Calu3 (cell line): ENCODE measurements at regions of chr16 and their contacts with region 1.

Region 1: GRCh38 chr16:23803591-23804123 is 32.1 kb upstream of the PRKCB start:
- DNase-seq: peak; percentile 72
- H3K4me3 Mint-ChIP-seq: no peak overlapping the region
- H3K27ac Mint-ChIP-seq: no peak overlapping the region
- H3K4me1 Mint-ChIP-seq: peaks cover 12% of the 10 kb centered on the region
- H3K27me3 Mint-ChIP-seq: peaks cover 44% of the 10 kb centered on the region
- CTCF ChIP-seq: peak; percentile 54

Region 2: GRCh38 chr16:23678430-23679273 is 125.0 kb before region 1 on chr16 and contains the start of gene PLK1:
- CTCF ChIA-PET with region 1: no interaction called
- intact Hi-C with region 1: loop called (anchors 10 kb)
- DNase-seq: peak; percentile 92
- H3K4me3 Mint-ChIP-seq: peak within 1 kb of the TSS; percentile 100
- H3K27ac Mint-ChIP-seq: peak within 1 kb of the TSS; percentile 97
- H3K4me1 Mint-ChIP-seq: peaks cover 34% of the 10 kb centered on the region
- H3K27me3 Mint-ChIP-seq: no peaks in the 10 kb centered on the region
- CTCF ChIP-seq: peak; percentile 34
- total RNA-seq, gene PLK1: 122 and 136 TPM in 2 replicates

Region 3: DNA sequence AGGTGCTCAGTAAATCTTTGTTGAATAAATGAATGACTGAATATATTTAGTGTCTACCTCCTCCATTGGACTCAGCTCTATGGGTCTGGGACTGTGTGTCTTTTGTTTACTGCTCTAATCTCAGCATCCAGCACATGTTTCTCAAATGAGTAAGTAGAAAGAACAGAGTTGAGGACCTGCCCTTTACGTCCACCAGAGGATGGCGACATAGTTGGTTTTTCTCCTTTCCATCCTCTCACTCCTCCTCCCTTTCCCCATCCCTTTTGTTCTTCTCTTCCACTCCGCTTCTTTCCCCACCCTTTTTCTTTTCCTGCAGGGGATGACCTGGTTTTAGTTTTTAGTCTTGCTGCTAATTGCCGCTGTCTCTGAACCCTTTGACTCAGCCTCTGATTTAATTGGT is 60.9 kb before region 1 on chr16:
- CTCF ChIA-PET with region 1: no interaction called
- intact Hi-C with region 1: loop called (anchors 5 kb)
- DNase-seq: no peak
- H3K4me3 Mint-ChIP-seq: no peak overlapping the region
- H3K27ac Mint-ChIP-seq: no peak overlapping the region
- H3K4me1 Mint-ChIP-seq: no peaks in the 10 kb centered on the region
- H3K27me3 Mint-ChIP-seq: peaks cover 94% of the 10 kb centered on the region
- CTCF ChIP-seq: no peak

Region 4: DNA sequence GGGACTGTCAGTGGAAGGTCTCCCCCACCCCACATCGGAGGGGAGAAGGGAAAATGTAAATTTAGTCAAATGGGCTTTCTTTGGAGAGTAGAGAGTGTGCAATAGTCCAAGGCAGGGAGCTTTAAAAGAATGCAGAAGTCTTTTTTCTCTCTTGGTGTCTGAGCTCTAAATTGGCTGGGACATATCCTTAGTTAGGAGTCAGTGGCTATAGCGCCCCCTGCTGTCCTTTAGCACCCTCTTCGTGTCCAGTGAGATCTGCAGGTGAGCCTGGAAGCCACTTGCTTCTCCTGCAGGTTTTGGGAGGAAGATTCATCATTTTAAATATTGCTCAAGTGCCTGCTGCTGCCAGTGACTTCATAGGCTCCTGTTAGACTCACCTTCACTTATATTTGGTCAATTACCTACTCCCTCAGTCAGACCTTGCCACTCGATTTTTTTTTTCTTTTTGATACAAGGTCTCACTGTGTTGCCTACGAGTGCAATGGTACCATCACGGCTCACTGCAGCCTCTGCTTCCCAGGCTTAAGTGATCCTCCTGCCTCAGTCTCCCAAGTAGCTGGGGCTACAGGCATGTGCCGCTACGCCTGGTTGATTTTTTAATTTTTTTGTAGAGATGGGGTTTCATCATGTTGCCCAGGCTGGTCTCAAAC is 206.9 kb after region 1 on chr16:
- CTCF ChIA-PET with region 1: interaction called, 7 read pairs
- intact Hi-C with region 1: loop called (anchors 1 kb)
- DNase-seq: peak; percentile 74
- H3K4me3 Mint-ChIP-seq: no peak overlapping the region
- H3K27ac Mint-ChIP-seq: no peak overlapping the region
- H3K4me1 Mint-ChIP-seq: no peaks in the 10 kb centered on the region
- H3K27me3 Mint-ChIP-seq: peaks cover 67% of the 10 kb centered on the region
- CTCF ChIP-seq: peak; percentile 80

Region 5: DNA sequence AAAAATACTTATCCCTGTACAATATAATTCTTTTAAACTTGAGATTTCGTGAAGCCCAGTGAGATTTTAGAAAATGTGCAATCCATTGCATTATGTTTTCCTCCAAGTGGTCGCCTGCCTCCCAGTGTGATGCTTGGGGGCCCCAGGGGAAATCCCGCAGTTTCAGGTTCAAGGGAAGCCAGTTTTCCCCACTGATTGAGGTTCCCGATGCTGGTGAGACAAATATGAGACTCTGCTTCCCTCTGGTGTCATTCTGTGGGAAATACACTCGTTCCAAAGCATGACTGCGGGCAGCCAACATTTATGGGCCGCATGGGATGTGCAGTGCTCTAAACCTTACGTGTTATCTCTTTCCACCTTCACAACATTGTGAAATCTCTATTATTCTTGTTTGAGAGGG is 233.0 kb after region 1 on chr16:
- CTCF ChIA-PET with region 1: no interaction called
- intact Hi-C with region 1: loop called (anchors 1 kb)
- DNase-seq: peak; percentile 62
- H3K4me3 Mint-ChIP-seq: no peak overlapping the region
- H3K27ac Mint-ChIP-seq: no peak overlapping the region
- H3K4me1 Mint-ChIP-seq: no peaks in the 10 kb centered on the region
- H3K27me3 Mint-ChIP-seq: peaks cover 88% of the 10 kb centered on the region
- CTCF ChIP-seq: peak; percentile 71